Heart left ventricle (tissue), 16 donors: ENCODE measurements at regions of chr18 and their contacts with region 1.

Region 1: DNA sequence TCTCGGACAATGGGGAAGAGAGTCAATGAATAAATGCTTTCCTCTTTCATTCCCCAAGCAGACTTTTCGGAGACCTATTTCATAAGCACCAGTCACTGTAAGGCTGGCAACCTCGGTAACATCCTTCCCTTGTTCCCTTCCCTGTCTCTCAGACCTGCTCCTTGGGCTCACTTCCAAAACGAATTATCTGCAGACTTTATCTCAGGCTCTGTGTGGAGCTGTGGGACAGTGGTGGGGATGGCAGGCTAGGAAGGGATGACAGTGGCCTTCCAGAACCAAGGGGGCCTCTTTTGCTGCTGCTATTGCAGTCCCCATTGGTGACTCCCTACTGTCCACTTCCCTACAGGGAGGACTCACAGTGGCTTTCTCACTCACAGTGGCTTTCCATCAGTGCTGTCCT is 185.6 kb upstream of the MEX3C start:
- DNase-seq: no peak
- ATAC-seq: no peak
- H3K4me3 ChIP-seq: no peak overlapping the region
- H3K27ac ChIP-seq: no peak overlapping the region
- H3K4me1 ChIP-seq: no peaks in the 10 kb centered on the region
- H3K27me3 ChIP-seq: no peaks in the 10 kb centered on the region
- CTCF ChIP-seq: no peak
- POLR2A ChIP-seq: no peak

Region 2: DNA sequence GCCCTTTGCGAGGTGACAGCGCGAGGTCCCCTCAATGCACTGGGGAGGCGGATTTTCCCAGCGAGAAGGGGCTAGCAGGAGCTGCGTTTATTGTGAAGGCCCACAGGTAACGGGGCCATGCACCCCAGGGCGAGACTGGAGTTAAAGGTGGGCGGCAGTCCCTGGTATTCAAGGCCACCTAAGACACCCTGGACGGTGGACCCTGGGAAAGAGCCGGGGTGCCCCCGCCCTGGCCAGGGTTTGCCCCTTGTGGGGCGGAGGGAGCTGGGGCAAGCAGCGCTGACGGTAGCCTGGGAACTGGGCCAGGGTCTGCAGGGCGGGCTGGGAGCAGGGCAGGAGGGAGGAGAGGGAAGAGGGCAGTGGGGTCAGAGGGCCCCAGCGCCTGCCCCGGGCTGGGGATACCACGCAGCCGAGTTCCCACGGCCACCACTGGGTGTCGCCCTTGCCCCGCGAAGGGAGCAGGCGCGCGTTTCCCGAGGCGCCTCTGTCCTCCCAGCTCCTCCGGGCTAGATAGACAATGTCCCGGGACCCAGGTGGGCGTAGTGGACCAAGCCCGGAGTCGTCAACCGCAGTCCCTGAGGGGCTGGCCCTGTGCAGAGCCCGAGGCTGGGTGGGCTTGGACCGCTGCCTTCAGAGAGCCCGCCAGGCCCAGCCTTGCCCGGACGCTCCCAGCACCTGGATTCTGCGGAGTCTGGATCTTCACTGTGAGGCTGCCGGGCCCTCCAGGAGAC is 272.9 kb before region 1 on chr18:
- intact Hi-C with region 1: loop called in 7 of 10 experiments (anchors 2 to 5 kb)
- DNase-seq: peak; percentile 52 to 85 (median 64)
- ATAC-seq: peak; percentile 82 to 96 (median 94)
- H3K4me3 ChIP-seq: peak overlapping the region in 2 of 12 donors; percentile 20 to 24
- H3K27ac ChIP-seq: no peak overlapping the region
- H3K4me1 ChIP-seq: peaks cover 0 to 6% (median 0%) of the 10 kb centered on the region in 12 donors
- H3K27me3 ChIP-seq: peaks cover 0 to 4% (median 0%) of the 10 kb centered on the region in 9 donors
- CTCF ChIP-seq: peak; percentile 85 to 99 (median 96)
- POLR2A ChIP-seq: no peak

Region 3: GRCh38 chr18:51197661-51198424 is 185.3 kb before region 1 on chr18 and contains the start of gene MEX3C:
- intact Hi-C with region 1: loop called in 1 of 10 experiments (anchors 10 kb)
- DNase-seq: peak; percentile 99 to 100 (median 99)
- ATAC-seq: peak; percentile 95 to 97 (median 97)
- H3K4me3 ChIP-seq: peak within 1 kb of the TSS; percentile 64 to 99 (median 88)
- H3K27ac ChIP-seq: peak within 1 kb of the TSS; percentile 92 to 99 (median 96)
- H3K4me1 ChIP-seq: peaks cover 1 to 29% (median 26%) of the 10 kb centered on the region in 12 donors
- H3K27me3 ChIP-seq: no peaks in the 10 kb centered on the region
- CTCF ChIP-seq: peak in 11 of 12 donors; percentile 15 to 68 (median 37)
- POLR2A ChIP-seq: peak in 1 of 2 donors; percentile 43
- total RNA-seq, gene MEX3C: 15.1 to 28.2 (median 20.7) TPM

Region 4: GRCh38 chr18:51278045-51278649 is 105.0 kb before region 1 on chr18:
- intact Hi-C with region 1: loop called in 2 of 10 experiments (anchors 10 kb)
- DNase-seq: peak in 2 of 5 donors; percentile 16 to 31
- ATAC-seq: peak; percentile 28 to 64 (median 54)
- H3K4me3 ChIP-seq: no peak overlapping the region
- H3K27ac ChIP-seq: no peak overlapping the region
- H3K4me1 ChIP-seq: peaks cover 0 to 9% (median 0%) of the 10 kb centered on the region in 12 donors
- H3K27me3 ChIP-seq: no peaks in the 10 kb centered on the region
- CTCF ChIP-seq: peak in 10 of 12 donors; percentile 30 to 56 (median 54)
- POLR2A ChIP-seq: no peak

Region 5: GRCh38 chr18:51290860-51291259 is 92.3 kb before region 1 on chr18:
- intact Hi-C with region 1: loop called in 1 of 10 experiments (anchors 10 kb)
- DNase-seq: no peak
- ATAC-seq: no peak
- H3K4me3 ChIP-seq: no peak overlapping the region
- H3K27ac ChIP-seq: no peak overlapping the region
- H3K4me1 ChIP-seq: peaks cover 0 to 9% (median 0%) of the 10 kb centered on the region in 12 donors
- H3K27me3 ChIP-seq: no peaks in the 10 kb centered on the region
- CTCF ChIP-seq: no peak
- POLR2A ChIP-seq: no peak